SK-N-SH (cell line): ENCODE measurements at regions of chr1 and their contacts with region 1.

Region 1: GRCh38 chr1:16032388-16033103 is 10.7 kb downstream of the CLCNKA start:
- DNase-seq: peak; percentile 97
- H3K4me3 ChIP-seq: no peak overlapping the region; a peak in 1 of 4 replicates
- H3K27ac ChIP-seq: no peak overlapping the region
- H3K4me1 ChIP-seq: peaks cover 0 to 4% of the 10 kb centered on the region in 2 experiments; a peak in 1 of 4 replicates
- H3K27me3 ChIP-seq: no peaks in the 10 kb centered on the region
- CTCF ChIP-seq: peak; percentile 78
- EP300 ChIP-seq: no peak
- RAD21 ChIP-seq: peak; percentile 92

Region 2: DNA sequence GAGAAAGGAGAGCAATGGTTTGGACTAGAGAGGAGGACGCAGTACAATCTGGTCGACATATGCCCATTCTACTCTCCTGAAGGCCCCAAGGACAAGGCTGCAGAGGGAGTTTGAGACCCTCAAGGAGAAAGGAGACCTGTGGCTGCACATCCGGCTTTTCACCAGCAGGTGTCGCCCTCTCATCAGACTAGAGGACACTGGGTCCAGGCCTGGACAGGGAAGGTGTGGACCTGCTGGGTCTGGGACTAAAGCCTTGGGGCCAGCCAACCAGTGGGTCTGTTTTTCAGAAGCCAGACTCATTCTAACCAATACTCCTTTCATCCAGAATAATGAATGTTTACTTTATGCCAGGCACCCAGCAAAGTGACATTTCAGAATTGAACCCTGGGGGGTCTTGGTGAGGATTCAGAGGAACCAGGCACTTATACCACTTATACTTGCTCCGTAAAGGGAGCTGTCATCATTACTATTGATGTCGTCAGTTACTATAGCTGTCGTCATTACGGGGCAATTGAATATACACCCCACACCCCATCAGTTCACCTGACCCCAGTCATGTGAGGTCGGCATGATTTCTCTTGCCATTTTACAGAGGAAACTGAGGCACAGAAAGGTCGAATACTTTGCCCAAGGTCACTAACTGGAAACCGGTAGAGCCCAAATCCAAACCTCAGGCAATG is 23.4 kb before region 1 on chr1:
- CTCF ChIA-PET with region 1: interaction called, 44 read pairs
- POLR2A ChIA-PET with region 1: no interaction called
- DNase-seq: peak; percentile 91
- H3K4me3 ChIP-seq: no peak overlapping the region; a peak in 1 of 4 replicates
- H3K27ac ChIP-seq: no peak overlapping the region
- H3K4me1 ChIP-seq: peaks cover 0 to 6% of the 10 kb centered on the region in 2 experiments; a peak in 1 of 4 replicates
- H3K27me3 ChIP-seq: no peaks in the 10 kb centered on the region
- CTCF ChIP-seq: peak; percentile 97
- EP300 ChIP-seq: no peak
- RAD21 ChIP-seq: peak; percentile 98

Region 3: DNA sequence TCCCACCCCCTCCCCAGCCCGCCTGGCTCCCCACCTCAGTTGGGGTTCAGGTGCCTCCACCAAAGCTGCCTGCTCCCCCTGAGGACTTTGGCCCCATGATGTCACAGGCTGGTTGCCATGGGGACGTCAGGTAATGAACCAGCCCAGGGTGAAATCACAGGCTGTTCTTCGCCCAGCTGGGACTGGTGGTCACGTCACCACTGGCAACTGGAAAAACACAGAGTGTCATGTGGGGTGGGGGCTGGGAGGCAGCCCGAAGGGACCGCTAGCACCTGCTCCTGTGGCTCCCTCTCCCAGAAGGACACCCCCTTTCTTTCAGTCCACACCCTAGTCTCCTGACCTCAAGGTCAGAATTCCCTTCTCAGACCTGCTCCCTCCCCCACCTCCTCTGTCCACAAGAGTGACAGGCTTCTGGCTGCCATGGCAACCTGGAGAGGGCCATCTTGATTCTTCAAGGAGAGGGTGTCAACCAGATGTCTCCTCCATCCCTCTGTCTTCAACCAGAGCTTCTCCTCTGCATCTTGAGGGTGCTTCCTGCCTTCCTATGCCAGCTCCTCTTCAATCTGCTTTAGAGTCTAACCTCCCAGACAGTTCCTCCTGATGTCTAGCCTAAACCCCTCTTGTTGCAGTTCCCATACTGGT is 34.7 kb after region 1 on chr1:
- CTCF ChIA-PET with region 1: interaction called, 12 read pairs
- POLR2A ChIA-PET with region 1: no interaction called
- DNase-seq: peak; percentile 49
- H3K4me3 ChIP-seq: no peak overlapping the region
- H3K27ac ChIP-seq: no peak overlapping the region
- H3K4me1 ChIP-seq: peaks cover 0 to 4% of the 10 kb centered on the region in 2 experiments; a peak in 1 of 4 replicates
- H3K27me3 ChIP-seq: no peaks in the 10 kb centered on the region
- CTCF ChIP-seq: no peak
- EP300 ChIP-seq: no peak
- RAD21 ChIP-seq: no peak

Region 4: DNA sequence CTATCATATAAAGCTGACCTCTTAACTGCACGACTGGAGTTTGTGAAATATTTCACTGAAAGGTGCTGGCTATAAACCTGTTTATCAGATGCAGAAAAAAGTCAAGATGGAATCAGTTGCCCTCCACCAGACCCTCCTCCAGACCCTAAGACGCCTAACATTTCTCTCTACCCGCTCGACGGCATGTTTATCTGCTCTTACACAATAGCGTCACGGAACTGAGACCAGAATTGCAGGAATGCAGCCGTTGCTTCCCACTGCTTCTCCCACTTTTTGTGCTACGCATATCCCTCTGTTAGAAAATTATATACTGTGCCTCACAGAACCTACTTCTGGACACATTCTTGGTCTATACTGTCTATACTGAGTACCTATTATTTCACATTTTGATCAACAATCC is 69.1 kb after region 1 on chr1:
- CTCF ChIA-PET with region 1: no interaction called
- POLR2A ChIA-PET with region 1: no interaction called
- DNase-seq: no peak
- H3K4me3 ChIP-seq: no peak overlapping the region
- H3K27ac ChIP-seq: no peak overlapping the region
- H3K4me1 ChIP-seq: no peaks in the 10 kb centered on the region; a peak in 1 of 4 replicates
- H3K27me3 ChIP-seq: no peaks in the 10 kb centered on the region
- CTCF ChIP-seq: no peak
- EP300 ChIP-seq: no peak
- RAD21 ChIP-seq: no peak